Transverse colon (tissue), 4 donors: ENCODE measurements at regions of chrX and their contacts with region 1.

Region 1: GRCh38 chrX:9677098-9677739 is 88.4 kb downstream of the GPR143 start:
- DNase-seq: peak; percentile 59
- H3K4me3 ChIP-seq: no peak overlapping the region
- H3K27ac ChIP-seq: peak overlapping the region; percentile 59 to 69 (median 64)
- H3K4me1 ChIP-seq: peaks cover 0 to 2% (median 0%) of the 10 kb centered on the region in 4 donors
- H3K27me3 ChIP-seq: no peaks in the 10 kb centered on the region
- CTCF ChIP-seq: no peak
- EP300 ChIP-seq: no peak
- POLR2A ChIP-seq: no peak

Region 2: GRCh38 chrX:8971116-8971515 is 706.1 kb before region 1 on chrX:
- in situ Hi-C with region 1: loop called in 1 of 4 experiments (anchors 25 kb)
- intact Hi-C with region 1: no loop called
- DNase-seq: no peak
- H3K4me3 ChIP-seq: no peak overlapping the region
- H3K27ac ChIP-seq: no peak overlapping the region
- H3K4me1 ChIP-seq: no peaks in the 10 kb centered on the region
- H3K27me3 ChIP-seq: no peaks in the 10 kb centered on the region
- CTCF ChIP-seq: peak; percentile 27 to 53 (median 32)
- EP300 ChIP-seq: no peak
- POLR2A ChIP-seq: no peak

Region 3: GRCh38 chrX:9341291-9342201 is 335.7 kb before region 1 on chrX:
- in situ Hi-C with region 1: loop called in 2 of 4 experiments (anchors 25 kb)
- intact Hi-C with region 1: no loop called
- DNase-seq: peak; percentile 81
- H3K4me3 ChIP-seq: peak overlapping the region in 2 of 4 donors; percentile 18 to 25
- H3K27ac ChIP-seq: peak overlapping the region; percentile 72 to 86 (median 85)
- H3K4me1 ChIP-seq: peaks cover 5 to 22% (median 17%) of the 10 kb centered on the region in 4 donors
- H3K27me3 ChIP-seq: no peaks in the 10 kb centered on the region
- CTCF ChIP-seq: no peak
- EP300 ChIP-seq: no peak
- POLR2A ChIP-seq: no peak

Region 4: DNA sequence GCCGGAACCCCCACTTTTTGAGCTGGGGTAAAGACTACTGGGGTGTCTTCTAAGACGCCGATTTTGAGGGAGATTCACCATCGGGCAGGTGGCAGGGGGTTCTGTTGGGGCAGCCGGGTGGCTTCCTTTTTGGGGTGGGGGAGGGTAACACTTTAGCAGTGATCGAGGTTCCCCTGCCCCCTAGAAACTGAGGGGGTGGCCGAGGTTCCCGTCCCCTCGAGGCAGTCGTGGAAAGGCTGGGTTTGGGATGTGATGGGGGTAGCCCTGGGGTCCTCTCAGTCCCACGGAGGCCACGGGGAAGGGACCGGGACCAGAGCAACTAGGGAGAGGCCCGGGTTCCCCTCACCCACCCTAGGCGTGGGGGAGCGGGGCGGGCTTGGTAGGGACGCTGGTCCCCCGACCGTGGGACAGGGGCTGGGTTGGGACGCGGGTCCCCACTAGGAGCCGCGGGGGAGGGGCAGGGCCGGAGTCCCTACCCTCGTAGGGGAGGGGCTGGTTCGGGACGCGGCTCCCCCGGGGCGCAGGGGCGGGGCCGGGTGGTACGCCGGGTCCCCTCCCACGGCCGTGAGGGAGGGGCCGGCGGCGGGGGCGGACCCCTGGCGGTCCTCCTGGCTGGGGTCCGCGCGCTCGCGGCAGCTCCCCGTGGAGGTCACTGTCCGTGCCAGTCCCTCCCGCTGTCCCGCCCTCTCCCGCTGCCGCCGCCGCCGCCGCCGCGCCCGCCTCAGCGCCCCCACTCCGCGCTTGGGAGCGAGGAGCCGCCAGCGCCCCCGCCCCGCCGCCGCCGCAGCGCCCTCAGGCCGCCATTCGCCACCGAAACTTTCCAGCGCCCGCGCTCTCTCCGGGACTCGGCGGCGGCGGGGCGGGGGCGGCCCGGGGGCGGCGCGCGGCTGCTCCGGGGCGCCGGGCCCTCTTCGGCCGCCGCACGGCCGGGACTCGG is 212.5 kb before region 1 on chrX and contains the start of gene TBL1X:
- in situ Hi-C with region 1: loop called in 1 of 4 experiments (anchors 25 kb)
- intact Hi-C with region 1: no loop called
- DNase-seq: peak; percentile 59
- H3K4me3 ChIP-seq: peak within 1 kb of the TSS; percentile 56 to 81 (median 66)
- H3K27ac ChIP-seq: peak within 1 kb of the TSS; percentile 77 to 86 (median 85)
- H3K4me1 ChIP-seq: peaks cover 0 to 35% (median 15%) of the 10 kb centered on the region in 4 donors
- H3K27me3 ChIP-seq: no peaks in the 10 kb centered on the region
- CTCF ChIP-seq: no peak
- EP300 ChIP-seq: no peak
- POLR2A ChIP-seq: no peak
- total RNA-seq, gene TBL1X: 3.4 to 16.8 (median 13.0) TPM